CD4-positive, alpha-beta memory T cell (primary cell): ENCODE measurements at regions of chr15 and their contacts with region 1.

Region 1: DNA sequence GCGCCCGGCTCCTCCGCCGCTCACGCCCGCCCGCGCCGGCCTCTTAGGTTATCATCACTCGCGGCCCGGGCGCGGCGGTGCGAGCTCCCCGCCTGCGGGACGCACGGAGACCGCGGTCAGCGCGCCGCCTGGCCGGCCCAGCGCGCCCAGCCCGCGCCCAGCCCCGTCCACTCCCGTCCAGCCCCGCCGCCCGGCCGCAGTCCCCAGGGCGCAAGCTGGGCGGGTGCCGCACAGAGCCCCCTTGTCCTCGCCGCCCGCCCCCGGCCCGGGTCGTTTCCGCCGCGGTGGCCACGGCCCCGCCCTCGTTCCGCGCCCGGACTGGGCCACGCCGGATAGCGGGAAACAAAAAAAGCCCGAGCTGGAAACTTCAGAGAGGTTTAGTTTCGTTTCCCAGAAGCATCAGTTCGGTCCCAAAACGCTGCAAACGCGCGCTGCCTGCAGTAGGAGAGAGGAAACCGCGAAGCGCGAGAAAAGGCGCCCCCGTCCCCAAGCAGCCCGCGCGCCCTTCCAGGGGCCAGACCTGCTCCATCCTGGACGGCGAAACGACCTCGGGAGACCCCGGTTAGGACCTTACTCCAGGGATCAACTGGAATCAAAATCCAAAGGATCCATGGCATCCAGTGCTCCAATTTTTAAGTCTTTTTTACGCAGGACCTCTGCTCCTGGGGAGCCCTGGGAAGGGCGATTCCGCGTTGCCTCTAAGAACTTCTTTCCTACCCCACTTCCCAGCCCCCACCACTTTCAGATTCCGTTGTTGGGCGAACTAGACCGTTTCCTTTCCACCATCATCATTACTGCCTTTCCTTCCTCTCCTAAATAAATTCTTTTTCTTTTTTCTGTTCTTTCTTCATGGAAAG is at the start of gene ATP10A:
- DNase-seq: peak; percentile 40 to 64 (median 43)
- H3K4me3 ChIP-seq: peak within 1 kb of the TSS; percentile 62 to 64
- H3K4me3 Mint-ChIP-seq: peak within 1 kb of the TSS; percentile 88 to 97 (median 94)
- H3K27ac ChIP-seq: peak within 1 kb of the TSS; percentile 63
- H3K27ac Mint-ChIP-seq: peak within 1 kb of the TSS; percentile 96 to 98 (median 97)
- H3K4me1 ChIP-seq: peaks cover 35% of the 10 kb centered on the region
- H3K4me1 Mint-ChIP-seq: peaks cover 25 to 42% (median 33%) of the 10 kb centered on the region in 4 donors
- H3K27me3 ChIP-seq: no peaks in the 10 kb centered on the region
- H3K27me3 Mint-ChIP-seq: no peaks in the 10 kb centered on the region
- total RNA-seq, gene ATP10A: 48.2 to 51.1 TPM

Region 2: DNA sequence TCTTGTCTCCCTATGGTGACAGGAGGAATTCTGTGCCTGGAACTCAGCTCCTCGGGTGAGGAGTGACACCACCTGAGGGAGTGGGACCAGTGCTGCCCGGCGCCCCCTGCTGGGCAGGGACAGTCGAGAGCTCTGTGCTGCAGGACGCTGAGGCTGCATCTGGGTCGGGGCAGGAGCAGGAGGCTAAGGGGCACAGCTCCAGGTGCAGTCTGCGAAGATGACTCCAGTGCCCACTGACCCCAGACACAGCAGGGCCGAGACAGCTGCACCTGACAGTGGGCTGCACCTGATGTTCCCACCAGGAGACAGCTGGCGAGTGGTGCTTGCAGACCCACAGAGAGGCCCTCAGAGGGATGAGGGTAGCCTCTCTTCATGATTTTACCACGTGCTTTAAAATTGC is 153.2 kb before region 1 on chr15:
- CTCF ChIA-PET with region 1: no interaction called
- POLR2A ChIA-PET with region 1: no interaction called
- intact Hi-C with region 1: loop called (anchors 5 kb)
- DNase-seq: peak in 4 of 5 donors; percentile 23 to 29 (median 26)
- H3K4me3 ChIP-seq: no peak overlapping the region
- H3K4me3 Mint-ChIP-seq: no peak overlapping the region
- H3K27ac ChIP-seq: no peak overlapping the region
- H3K27ac Mint-ChIP-seq: no peak overlapping the region
- H3K4me1 ChIP-seq: no peaks in the 10 kb centered on the region
- H3K4me1 Mint-ChIP-seq: peaks cover 0 to 1% (median 0%) of the 10 kb centered on the region in 4 donors
- H3K27me3 ChIP-seq: no peaks in the 10 kb centered on the region
- H3K27me3 Mint-ChIP-seq: no peaks in the 10 kb centered on the region

Region 3: DNA sequence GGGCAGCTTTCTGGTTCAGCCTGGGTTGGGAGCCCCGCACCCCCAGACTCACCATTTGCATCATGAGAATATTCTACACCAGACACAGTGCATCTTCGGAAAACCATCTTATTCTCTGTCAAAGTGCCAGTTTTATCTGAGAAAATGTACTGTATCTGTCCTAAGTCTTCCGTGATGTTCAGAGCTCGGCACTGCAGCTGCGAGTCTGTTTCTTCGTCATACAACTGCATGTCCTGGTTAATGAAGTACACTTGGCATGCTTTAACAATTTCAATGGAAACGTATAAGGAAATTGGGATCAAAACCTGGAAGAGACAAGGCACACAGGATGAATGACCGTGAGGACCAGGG is 141.8 kb before region 1 on chr15:
- CTCF ChIA-PET with region 1: no interaction called
- POLR2A ChIA-PET with region 1: no interaction called
- intact Hi-C with region 1: no loop called
- DNase-seq: no peak
- H3K4me3 ChIP-seq: no peak overlapping the region
- H3K4me3 Mint-ChIP-seq: no peak overlapping the region
- H3K27ac ChIP-seq: no peak overlapping the region
- H3K27ac Mint-ChIP-seq: peak overlapping the region in 1 of 7 donors; percentile 33
- H3K4me1 ChIP-seq: no peaks in the 10 kb centered on the region
- H3K4me1 Mint-ChIP-seq: no peaks in the 10 kb centered on the region
- H3K27me3 ChIP-seq: no peaks in the 10 kb centered on the region
- H3K27me3 Mint-ChIP-seq: no peaks in the 10 kb centered on the region

Region 4: GRCh38 chr15:25783607-25784540 is 79.5 kb before region 1 on chr15:
- CTCF ChIA-PET with region 1: interaction called, 23 read pairs
- POLR2A ChIA-PET with region 1: interaction called, 18 read pairs
- intact Hi-C with region 1: loop called (anchors 1 kb)
- DNase-seq: peak in 4 of 5 donors; percentile 17 to 29 (median 25)
- H3K4me3 ChIP-seq: no peak overlapping the region
- H3K4me3 Mint-ChIP-seq: no peak overlapping the region
- H3K27ac ChIP-seq: no peak overlapping the region
- H3K27ac Mint-ChIP-seq: peak overlapping the region in 4 of 7 donors; percentile 30 to 64 (median 44)
- H3K4me1 ChIP-seq: no peaks in the 10 kb centered on the region
- H3K4me1 Mint-ChIP-seq: peaks cover 8 to 28% (median 25%) of the 10 kb centered on the region in 4 donors
- H3K27me3 ChIP-seq: no peaks in the 10 kb centered on the region
- H3K27me3 Mint-ChIP-seq: no peaks in the 10 kb centered on the region

Region 5: GRCh38 chr15:25838191-25838870 is 25.0 kb before region 1 on chr15:
- CTCF ChIA-PET with region 1: no interaction called
- POLR2A ChIA-PET with region 1: interaction called, 17 read pairs
- intact Hi-C with region 1: no loop called
- DNase-seq: no peak
- H3K4me3 ChIP-seq: no peak overlapping the region
- H3K4me3 Mint-ChIP-seq: peak overlapping the region in 2 of 8 donors; percentile 5 to 27
- H3K27ac ChIP-seq: no peak overlapping the region
- H3K27ac Mint-ChIP-seq: peak overlapping the region in 1 of 7 donors; percentile 50
- H3K4me1 ChIP-seq: peaks cover 5% of the 10 kb centered on the region
- H3K4me1 Mint-ChIP-seq: peaks cover 10 to 42% (median 34%) of the 10 kb centered on the region in 4 donors
- H3K27me3 ChIP-seq: no peaks in the 10 kb centered on the region
- H3K27me3 Mint-ChIP-seq: no peaks in the 10 kb centered on the region

Region 6: GRCh38 chr15:25892126-25892525 is 28.8 kb after region 1 on chr15:
- CTCF ChIA-PET with region 1: no interaction called
- POLR2A ChIA-PET with region 1: no interaction called
- intact Hi-C with region 1: no loop called
- DNase-seq: no peak
- H3K4me3 ChIP-seq: no peak overlapping the region
- H3K4me3 Mint-ChIP-seq: no peak overlapping the region
- H3K27ac ChIP-seq: no peak overlapping the region
- H3K27ac Mint-ChIP-seq: no peak overlapping the region
- H3K4me1 ChIP-seq: no peaks in the 10 kb centered on the region
- H3K4me1 Mint-ChIP-seq: no peaks in the 10 kb centered on the region
- H3K27me3 ChIP-seq: no peaks in the 10 kb centered on the region
- H3K27me3 Mint-ChIP-seq: peaks cover 0 to 6% of the 10 kb centered on the region in 2 donors

Region 7: DNA sequence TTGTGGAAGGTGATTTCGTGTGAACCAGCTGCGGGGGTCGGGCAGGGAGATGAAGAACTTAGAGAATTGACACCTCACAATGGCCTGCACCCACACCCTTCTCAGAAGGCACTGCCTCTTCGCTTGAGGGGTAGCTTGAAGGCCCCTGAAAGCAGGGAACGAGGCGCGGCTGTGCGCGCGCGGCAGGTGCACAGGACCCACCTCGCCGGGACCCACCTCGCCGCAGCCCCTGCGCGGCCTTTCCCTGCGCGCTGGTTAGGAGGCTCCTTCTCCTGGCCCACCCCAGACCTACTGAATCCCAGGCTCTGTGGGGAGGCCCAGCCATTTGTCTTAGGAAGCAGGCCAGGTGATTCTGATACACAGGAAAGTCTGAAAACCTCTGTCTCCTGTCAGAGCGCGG is 46.0 kb after region 1 on chr15:
- CTCF ChIA-PET with region 1: no interaction called
- POLR2A ChIA-PET with region 1: no interaction called
- intact Hi-C with region 1: no loop called
- DNase-seq: no peak
- H3K4me3 ChIP-seq: no peak overlapping the region
- H3K4me3 Mint-ChIP-seq: no peak overlapping the region
- H3K27ac ChIP-seq: no peak overlapping the region
- H3K27ac Mint-ChIP-seq: no peak overlapping the region
- H3K4me1 ChIP-seq: no peaks in the 10 kb centered on the region
- H3K4me1 Mint-ChIP-seq: peaks cover 0 to 1% (median 0%) of the 10 kb centered on the region in 4 donors
- H3K27me3 ChIP-seq: no peaks in the 10 kb centered on the region
- H3K27me3 Mint-ChIP-seq: no peaks in the 10 kb centered on the region

Region 8: DNA sequence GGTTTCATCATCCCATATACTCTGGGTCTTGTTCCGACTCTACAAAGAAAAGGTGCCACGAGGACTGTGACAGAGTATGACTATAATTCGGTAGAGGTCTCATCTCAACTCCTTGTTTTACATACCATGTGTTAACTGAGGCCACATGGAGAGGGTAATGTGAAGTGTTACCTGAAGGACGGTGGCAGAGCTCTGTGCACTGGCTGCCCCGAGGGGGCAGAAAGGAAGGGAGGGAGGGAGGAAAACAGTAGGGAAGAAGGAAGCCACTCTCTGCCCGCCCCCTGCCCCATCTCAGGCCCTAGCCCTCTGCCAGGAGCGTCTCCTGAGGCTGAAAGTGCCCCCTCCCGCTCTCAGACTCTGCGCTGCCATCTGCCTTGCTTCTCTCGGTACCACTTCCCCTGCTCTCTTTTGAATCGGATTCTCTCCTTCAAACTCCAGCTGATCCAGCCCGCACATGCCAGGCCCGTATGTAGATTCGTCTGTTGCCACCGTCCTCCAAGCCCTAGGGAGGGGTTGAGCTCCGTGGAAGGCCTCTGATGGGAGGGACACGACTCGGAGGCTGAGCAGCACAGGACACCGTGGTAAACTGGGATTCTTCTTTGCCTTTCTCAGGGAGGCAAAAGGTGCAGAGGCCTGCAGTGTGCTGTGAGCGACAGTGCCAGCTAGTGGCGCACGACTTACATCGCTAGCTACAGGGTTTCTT is 70.3 kb after region 1 on chr15:
- CTCF ChIA-PET with region 1: interaction called, 10 read pairs
- POLR2A ChIA-PET with region 1: interaction called, 6 read pairs
- intact Hi-C with region 1: loop called (anchors 5 kb)
- DNase-seq: peak; percentile 58 to 69 (median 63)
- H3K4me3 ChIP-seq: peak overlapping the region in 1 of 2 donors; percentile 50
- H3K4me3 Mint-ChIP-seq: peak overlapping the region; percentile 85 to 96 (median 90)
- H3K27ac ChIP-seq: no peak overlapping the region
- H3K27ac Mint-ChIP-seq: peak overlapping the region in 5 of 7 donors; percentile 64 to 79 (median 72)
- H3K4me1 ChIP-seq: peaks cover 8% of the 10 kb centered on the region
- H3K4me1 Mint-ChIP-seq: peaks cover 2 to 6% (median 4%) of the 10 kb centered on the region in 4 donors
- H3K27me3 ChIP-seq: no peaks in the 10 kb centered on the region
- H3K27me3 Mint-ChIP-seq: peaks cover 3 to 6% of the 10 kb centered on the region in 2 donors